Naive thymus-derived CD4-positive, alpha-beta T cell (primary cell): ENCODE measurements at regions of chr17 and their contacts with region 1.

Region 1: DNA sequence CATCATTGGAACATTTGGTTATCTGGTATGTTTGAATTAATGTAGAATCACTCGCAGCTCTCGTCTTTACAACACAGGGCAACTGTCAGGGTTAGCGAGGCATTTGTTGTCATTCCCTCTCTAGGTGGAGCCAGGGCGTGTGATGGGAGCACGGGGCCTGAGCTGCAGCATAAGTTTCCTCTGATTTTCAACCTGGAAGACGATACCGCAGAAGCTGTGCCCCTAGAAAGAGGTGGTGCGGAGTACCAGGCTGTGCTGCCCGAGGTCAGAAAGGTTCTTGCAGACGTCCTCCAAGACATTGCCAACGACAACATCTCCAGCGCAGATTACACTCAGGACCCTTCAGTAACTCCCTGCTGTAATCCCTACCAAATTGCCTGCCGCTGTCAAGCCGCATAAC is 37.2 kb downstream of the WIPI1 start:
- DNase-seq: no peak
- ATAC-seq: no peak
- H3K4me3 ChIP-seq: no peak overlapping the region
- H3K4me3 Mint-ChIP-seq: no peak overlapping the region
- H3K27ac ChIP-seq: no peak overlapping the region
- H3K27ac Mint-ChIP-seq: peak overlapping the region in 2 of 9 donors; percentile 45 to 55
- H3K4me1 ChIP-seq: peaks cover 0 to 9% of the 10 kb centered on the region in 2 donors
- H3K4me1 Mint-ChIP-seq: peaks cover 5 to 30% (median 22%) of the 10 kb centered on the region in 7 donors
- H3K27me3 ChIP-seq: no peaks in the 10 kb centered on the region
- H3K27me3 Mint-ChIP-seq: no peaks in the 10 kb centered on the region

Region 2: DNA sequence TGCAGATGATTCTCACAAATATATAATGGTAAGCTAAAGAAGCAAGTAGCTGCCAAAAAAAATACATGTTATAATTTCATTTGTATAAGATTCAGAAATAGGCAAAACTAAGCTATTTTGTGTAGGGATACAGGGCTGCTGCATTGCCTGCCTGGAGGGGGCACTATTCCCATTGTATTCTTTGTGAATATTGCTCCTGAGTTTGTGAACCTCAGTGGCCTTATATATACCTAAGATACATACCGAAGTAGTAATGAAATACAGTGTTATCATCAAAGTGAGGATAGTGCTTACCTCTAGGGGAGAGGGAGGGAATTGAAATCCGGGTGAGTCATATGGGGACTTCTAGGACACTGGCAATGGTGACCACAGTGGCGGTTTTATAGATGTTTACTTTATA is 477.3 kb before region 1 on chr17:
- CTCF ChIA-PET with region 1: no interaction called
- POLR2A ChIA-PET with region 1: no interaction called
- intact Hi-C with region 1: no loop called
- DNase-seq: no peak
- ATAC-seq: peak; percentile 26
- H3K4me3 ChIP-seq: no peak overlapping the region
- H3K4me3 Mint-ChIP-seq: no peak overlapping the region
- H3K27ac ChIP-seq: no peak overlapping the region
- H3K27ac Mint-ChIP-seq: no peak overlapping the region
- H3K4me1 ChIP-seq: no peaks in the 10 kb centered on the region
- H3K4me1 Mint-ChIP-seq: no peaks in the 10 kb centered on the region
- H3K27me3 ChIP-seq: no peaks in the 10 kb centered on the region
- H3K27me3 Mint-ChIP-seq: no peaks in the 10 kb centered on the region

Region 3: DNA sequence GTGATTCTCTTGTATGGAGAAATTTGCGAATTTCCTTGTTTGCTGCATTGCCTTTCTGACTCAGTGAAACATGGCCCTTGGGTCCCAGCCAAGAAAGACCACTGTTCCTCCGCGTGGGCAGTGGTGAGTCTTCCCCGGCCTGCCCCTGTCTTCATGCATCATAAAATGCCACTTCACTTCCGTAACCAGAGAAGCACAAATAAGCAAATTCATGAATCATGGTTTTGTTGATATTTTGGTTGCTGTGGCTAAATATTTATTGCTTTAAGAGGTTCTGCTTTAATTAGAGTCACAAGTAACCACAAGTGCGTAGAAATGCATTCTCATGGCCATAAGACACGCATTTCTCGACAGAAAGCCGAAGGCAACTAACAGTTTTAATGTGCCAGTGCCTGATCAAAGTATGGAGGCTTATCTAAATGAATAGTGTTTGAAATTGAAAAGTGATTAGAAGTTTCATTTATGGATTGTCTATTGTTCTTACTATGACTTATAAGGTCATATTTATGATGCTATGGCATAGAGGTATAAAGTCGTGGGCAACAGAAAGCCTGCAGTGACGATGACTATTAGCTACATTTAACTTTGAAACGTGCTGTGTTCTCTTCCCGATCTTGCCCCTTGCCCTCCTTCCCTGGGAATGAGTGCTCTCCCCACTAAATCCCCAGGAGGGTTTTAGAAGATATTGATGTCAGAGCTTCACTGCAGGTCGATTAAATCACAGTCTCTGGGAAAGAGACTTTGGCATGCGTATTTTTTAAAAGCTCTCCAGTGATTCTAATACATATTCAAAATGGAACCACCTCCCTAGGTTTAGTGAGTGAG is 38.8 kb before region 1 on chr17:
- CTCF ChIA-PET with region 1: no interaction called
- POLR2A ChIA-PET with region 1: interaction called, 4 read pairs
- intact Hi-C with region 1: loop called in 1 of 2 experiments (anchors 5 kb)
- DNase-seq: no peak
- ATAC-seq: peak; percentile 62
- H3K4me3 ChIP-seq: no peak overlapping the region
- H3K4me3 Mint-ChIP-seq: no peak overlapping the region
- H3K27ac ChIP-seq: no peak overlapping the region
- H3K27ac Mint-ChIP-seq: peak overlapping the region in 1 of 9 donors; percentile 25
- H3K4me1 ChIP-seq: peaks cover 17% of the 10 kb centered on the region in 2 donors
- H3K4me1 Mint-ChIP-seq: peaks cover 19 to 28% (median 27%) of the 10 kb centered on the region in 7 donors
- H3K27me3 ChIP-seq: no peaks in the 10 kb centered on the region
- H3K27me3 Mint-ChIP-seq: peaks cover 0 to 3% (median 0%) of the 10 kb centered on the region in 5 donors

Region 4: GRCh38 chr17:68398691-68399637 is 21.1 kb before region 1 on chr17:
- CTCF ChIA-PET with region 1: no interaction called
- POLR2A ChIA-PET with region 1: interaction called, 6 read pairs
- intact Hi-C with region 1: loop called in 1 of 2 experiments (anchors 2 kb)
- DNase-seq: no peak
- ATAC-seq: peak; percentile 87
- H3K4me3 ChIP-seq: no peak overlapping the region
- H3K4me3 Mint-ChIP-seq: peak overlapping the region in 9 of 10 donors; percentile 0 to 73 (median 34)
- H3K27ac ChIP-seq: no peak overlapping the region
- H3K27ac Mint-ChIP-seq: peak overlapping the region in 5 of 9 donors; percentile 10 to 85 (median 48)
- H3K4me1 ChIP-seq: peaks cover 13 to 34% of the 10 kb centered on the region in 2 donors
- H3K4me1 Mint-ChIP-seq: peaks cover 15 to 37% (median 35%) of the 10 kb centered on the region in 7 donors
- H3K27me3 ChIP-seq: no peaks in the 10 kb centered on the region
- H3K27me3 Mint-ChIP-seq: no peaks in the 10 kb centered on the region

Region 5: GRCh38 chr17:68482576-68483041 is 62.5 kb after region 1 on chr17:
- CTCF ChIA-PET with region 1: no interaction called
- POLR2A ChIA-PET with region 1: no interaction called
- intact Hi-C with region 1: no loop called
- DNase-seq: no peak
- ATAC-seq: no peak
- H3K4me3 ChIP-seq: no peak overlapping the region
- H3K4me3 Mint-ChIP-seq: no peak overlapping the region
- H3K27ac ChIP-seq: no peak overlapping the region
- H3K27ac Mint-ChIP-seq: no peak overlapping the region
- H3K4me1 ChIP-seq: no peaks in the 10 kb centered on the region
- H3K4me1 Mint-ChIP-seq: peaks cover 4 to 12% (median 7%) of the 10 kb centered on the region in 7 donors
- H3K27me3 ChIP-seq: no peaks in the 10 kb centered on the region
- H3K27me3 Mint-ChIP-seq: peaks cover 0 to 45% (median 7%) of the 10 kb centered on the region in 5 donors